CD8-positive, alpha-beta T cell (primary cell): ENCODE measurements at regions of chrX and their contacts with region 1.

Region 1: DNA sequence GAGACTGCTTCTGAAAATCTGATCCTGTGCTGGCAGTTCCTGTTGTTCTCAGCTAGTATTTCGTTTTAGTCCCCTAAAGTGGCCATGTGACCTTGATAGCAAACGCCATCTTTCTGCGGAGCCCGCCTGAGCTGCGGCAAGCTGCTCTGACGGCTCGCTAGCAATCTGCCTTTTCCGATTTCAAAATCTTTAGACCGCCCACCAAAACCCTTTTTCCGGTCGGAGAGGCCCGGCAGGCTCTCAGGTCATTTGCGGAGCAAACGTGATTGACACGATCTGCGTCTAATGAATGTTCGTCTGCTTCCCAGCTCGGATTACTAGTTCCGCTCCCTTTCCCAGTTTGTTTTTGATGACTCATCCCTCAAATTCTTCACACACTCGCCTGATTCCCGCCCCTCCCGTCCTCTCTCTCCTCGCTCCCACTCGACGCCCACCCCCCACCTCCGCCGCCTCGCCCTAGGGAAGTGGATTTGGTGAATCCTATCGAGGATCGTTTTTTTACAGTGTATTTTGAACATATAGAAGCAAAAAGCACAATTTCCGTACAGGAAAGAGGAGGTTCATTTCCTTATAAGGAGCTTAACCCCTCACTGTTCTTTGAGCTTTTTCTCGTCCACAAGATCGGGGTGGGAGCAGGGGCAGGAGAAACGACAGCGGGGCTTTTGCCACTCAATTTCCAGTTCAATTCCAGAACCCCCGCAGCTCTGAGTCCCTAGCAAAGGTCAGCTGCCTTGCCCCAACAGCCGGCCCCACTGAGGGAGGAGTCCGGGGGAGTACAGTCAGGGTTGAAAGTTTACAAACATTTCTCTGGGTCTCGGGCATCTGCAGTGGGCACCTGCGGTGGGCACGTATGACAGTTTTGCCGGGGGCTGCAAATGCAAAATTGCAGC is 37.5 kb downstream of the NLGN3 start:
- DNase-seq: peak; percentile 56 to 94 (median 78)
- ATAC-seq: peak; percentile 92
- H3K4me3 ChIP-seq: peak overlapping the region; percentile 66 to 74
- H3K4me3 Mint-ChIP-seq: peak overlapping the region; percentile 96
- H3K27ac ChIP-seq: peak overlapping the region; percentile 78 to 97
- H3K27ac Mint-ChIP-seq: peak overlapping the region; percentile 100
- H3K4me1 ChIP-seq: peaks cover 7% of the 10 kb centered on the region
- H3K4me1 Mint-ChIP-seq: peaks cover 15% of the 10 kb centered on the region
- H3K27me3 ChIP-seq: no peaks in the 10 kb centered on the region
- H3K27me3 Mint-ChIP-seq: no peaks in the 10 kb centered on the region
- CTCF ChIP-seq: no peak

Region 2: DNA sequence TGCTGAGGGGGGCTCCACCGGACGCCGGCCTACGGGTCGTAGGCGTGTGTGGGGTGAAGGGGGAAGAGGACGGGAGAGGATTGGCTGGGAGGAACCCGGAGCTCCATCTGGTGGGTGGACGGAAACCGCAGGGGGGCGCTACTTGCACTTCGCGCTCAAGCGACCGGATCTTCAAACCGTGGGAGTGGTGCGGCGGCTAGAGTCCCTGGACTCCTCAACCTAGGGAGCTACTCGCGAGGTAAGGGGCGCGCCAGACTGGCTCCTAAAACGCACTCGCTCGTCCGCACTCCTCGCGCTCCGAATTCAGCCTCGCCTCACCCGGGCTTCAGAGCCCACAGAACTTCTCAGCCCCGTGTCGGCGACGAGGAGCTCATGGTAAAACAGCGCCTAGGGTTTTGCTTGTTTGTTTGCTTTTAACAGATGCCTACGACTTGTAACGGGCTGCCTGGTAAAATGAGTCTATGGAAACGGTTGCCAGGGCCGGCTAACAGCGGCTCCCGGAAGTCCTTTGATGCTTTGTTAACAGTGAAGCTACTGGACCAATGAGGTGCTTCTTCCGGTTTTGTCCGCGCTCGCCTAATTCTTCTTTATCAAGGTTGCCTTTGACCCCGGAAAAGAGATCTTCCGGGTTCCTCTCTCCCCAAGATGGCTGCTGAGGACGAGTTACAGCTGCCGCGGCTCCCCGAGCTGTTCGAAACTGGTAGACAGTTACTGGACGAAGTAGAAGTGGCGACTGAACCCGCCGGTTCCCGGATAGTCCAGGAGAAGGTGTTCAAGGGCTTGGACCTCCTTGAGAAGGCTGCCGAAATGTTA is 1048.6 kb before region 1 on chrX and contains the start of gene IGBP1:
- CTCF ChIA-PET with region 1: no interaction called
- POLR2A ChIA-PET with region 1: interaction called, 4 read pairs
- intact Hi-C with region 1: loop called in 1 of 2 experiments (anchors 5 kb)
- DNase-seq: peak; percentile 48 to 93 (median 76)
- ATAC-seq: peak; percentile 81
- H3K4me3 ChIP-seq: peak within 1 kb of the TSS; percentile 84 to 88
- H3K4me3 Mint-ChIP-seq: peak within 1 kb of the TSS; percentile 99
- H3K27ac ChIP-seq: peak within 1 kb of the TSS; percentile 95 to 96
- H3K27ac Mint-ChIP-seq: peak within 1 kb of the TSS; percentile 98
- H3K4me1 ChIP-seq: peaks cover 21% of the 10 kb centered on the region
- H3K4me1 Mint-ChIP-seq: peaks cover 45% of the 10 kb centered on the region
- H3K27me3 ChIP-seq: no peaks in the 10 kb centered on the region
- H3K27me3 Mint-ChIP-seq: no peaks in the 10 kb centered on the region
- CTCF ChIP-seq: peak; percentile 48
- total RNA-seq, gene IGBP1: 55.7 to 56.6 TPM

Region 3: DNA sequence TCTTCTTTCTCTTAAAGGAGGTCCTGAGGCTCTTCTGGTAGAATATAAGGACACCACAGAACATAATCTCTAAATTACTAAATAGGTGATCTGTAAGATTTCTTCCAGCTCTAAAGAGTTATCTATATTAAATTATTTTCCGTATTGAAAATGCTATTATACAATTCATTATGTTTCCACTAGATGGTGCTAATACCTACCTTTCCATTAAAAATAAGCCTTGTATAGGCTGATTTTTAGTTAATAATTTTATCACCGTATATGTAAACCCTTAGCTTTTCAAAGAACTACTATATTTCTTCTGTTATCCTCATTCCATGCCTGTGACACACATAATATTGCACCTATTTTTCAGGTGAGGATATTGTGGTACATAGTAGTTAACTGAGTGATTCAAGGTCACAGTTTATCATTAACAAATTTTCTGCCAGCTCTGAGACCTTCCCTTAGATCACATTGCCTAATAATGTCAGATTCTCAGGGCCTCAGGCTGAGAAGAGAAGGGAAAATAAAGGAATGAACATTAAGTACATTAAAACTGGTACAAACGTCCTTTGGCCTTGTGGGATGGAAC is 412.4 kb before region 1 on chrX:
- CTCF ChIA-PET with region 1: interaction called, 11 read pairs
- POLR2A ChIA-PET with region 1: no interaction called
- intact Hi-C with region 1: loop called in 1 of 2 experiments (anchors 2 kb)
- DNase-seq: peak in 1 of 9 experiments; percentile 20
- ATAC-seq: no peak
- H3K4me3 ChIP-seq: no peak overlapping the region
- H3K4me3 Mint-ChIP-seq: no peak overlapping the region
- H3K27ac ChIP-seq: no peak overlapping the region
- H3K27ac Mint-ChIP-seq: no peak overlapping the region
- H3K4me1 ChIP-seq: no peaks in the 10 kb centered on the region
- H3K4me1 Mint-ChIP-seq: no peaks in the 10 kb centered on the region
- H3K27me3 ChIP-seq: no peaks in the 10 kb centered on the region
- H3K27me3 Mint-ChIP-seq: no peaks in the 10 kb centered on the region
- CTCF ChIP-seq: peak; percentile 69

Region 4: GRCh38 chrX:71068049-71068763 is 113.9 kb before region 1 on chrX and contains the start of gene SNX12:
- CTCF ChIA-PET with region 1: no interaction called
- POLR2A ChIA-PET with region 1: interaction called, 3 read pairs
- intact Hi-C with region 1: loop called (anchors 1 to 5 kb)
- DNase-seq: peak; percentile 70 to 95 (median 84)
- ATAC-seq: peak; percentile 92
- H3K4me3 ChIP-seq: peak within 1 kb of the TSS; percentile 76 to 88
- H3K4me3 Mint-ChIP-seq: peak within 1 kb of the TSS; percentile 94
- H3K27ac ChIP-seq: peak within 1 kb of the TSS; percentile 86 to 91
- H3K27ac Mint-ChIP-seq: peak within 1 kb of the TSS; percentile 99
- H3K4me1 ChIP-seq: peaks cover 13% of the 10 kb centered on the region
- H3K4me1 Mint-ChIP-seq: peaks cover 27% of the 10 kb centered on the region
- H3K27me3 ChIP-seq: no peaks in the 10 kb centered on the region
- H3K27me3 Mint-ChIP-seq: no peaks in the 10 kb centered on the region
- CTCF ChIP-seq: no peak
- total RNA-seq, gene SNX12: 23.9 to 27.1 TPM

Region 5: GRCh38 chrX:71111141-71111843 is 70.9 kb before region 1 on chrX and contains the start of gene IL2RG:
- CTCF ChIA-PET with region 1: no interaction called
- POLR2A ChIA-PET with region 1: no interaction called
- intact Hi-C with region 1: loop called in 1 of 2 experiments (anchors 5 kb)
- DNase-seq: peak; percentile 53 to 94 (median 76)
- ATAC-seq: peak; percentile 85
- H3K4me3 ChIP-seq: peak within 1 kb of the TSS; percentile 74 to 84
- H3K4me3 Mint-ChIP-seq: peak within 1 kb of the TSS; percentile 98
- H3K27ac ChIP-seq: peak within 1 kb of the TSS; percentile 96 to 100
- H3K27ac Mint-ChIP-seq: peak within 1 kb of the TSS; percentile 99
- H3K4me1 ChIP-seq: peaks cover 41% of the 10 kb centered on the region
- H3K4me1 Mint-ChIP-seq: peaks cover 42% of the 10 kb centered on the region
- H3K27me3 ChIP-seq: no peaks in the 10 kb centered on the region
- H3K27me3 Mint-ChIP-seq: no peaks in the 10 kb centered on the region
- CTCF ChIP-seq: no peak
- total RNA-seq, gene IL2RG: 166 to 197 TPM

Region 6: GRCh38 chrX:71222929-71223328 is 40.8 kb after region 1 on chrX and contains the start of gene GJB1:
- CTCF ChIA-PET with region 1: no interaction called
- POLR2A ChIA-PET with region 1: no interaction called
- intact Hi-C with region 1: no loop called
- DNase-seq: no peak
- ATAC-seq: no peak
- H3K4me3 ChIP-seq: no peak within 1 kb of the TSS
- H3K4me3 Mint-ChIP-seq: no peak within 1 kb of the TSS
- H3K27ac ChIP-seq: no peak within 1 kb of the TSS
- H3K27ac Mint-ChIP-seq: no peak within 1 kb of the TSS
- H3K4me1 ChIP-seq: no peaks in the 10 kb centered on the region
- H3K4me1 Mint-ChIP-seq: no peaks in the 10 kb centered on the region
- H3K27me3 ChIP-seq: no peaks in the 10 kb centered on the region
- H3K27me3 Mint-ChIP-seq: no peaks in the 10 kb centered on the region
- CTCF ChIP-seq: no peak
- total RNA-seq, gene GJB1: not detected

Region 7: GRCh38 chrX:71254092-71254941 is 72.2 kb after region 1 on chrX and contains the start of gene ZMYM3:
- CTCF ChIA-PET with region 1: interaction called, 6 read pairs
- POLR2A ChIA-PET with region 1: interaction called, 17 read pairs
- intact Hi-C with region 1: loop called (anchors 1 kb)
- DNase-seq: peak; percentile 50 to 91 (median 80)
- ATAC-seq: peak; percentile 79
- H3K4me3 ChIP-seq: peak within 1 kb of the TSS; percentile 79 to 84
- H3K4me3 Mint-ChIP-seq: peak within 1 kb of the TSS; percentile 94
- H3K27ac ChIP-seq: peak within 1 kb of the TSS; percentile 85 to 87
- H3K27ac Mint-ChIP-seq: peak within 1 kb of the TSS; percentile 92
- H3K4me1 ChIP-seq: peaks cover 28% of the 10 kb centered on the region
- H3K4me1 Mint-ChIP-seq: peaks cover 26% of the 10 kb centered on the region
- H3K27me3 ChIP-seq: no peaks in the 10 kb centered on the region
- H3K27me3 Mint-ChIP-seq: no peaks in the 10 kb centered on the region
- CTCF ChIP-seq: no peak
- total RNA-seq, gene ZMYM3: 12.2 to 13.2 TPM

Region 8: GRCh38 chrX:72181178-72182125 is 999.3 kb after region 1 on chrX and contains the start of gene PIN4:
- CTCF ChIA-PET with region 1: no interaction called
- POLR2A ChIA-PET with region 1: no interaction called
- intact Hi-C with region 1: loop called in 1 of 2 experiments (anchors 10 kb)
- DNase-seq: peak; percentile 65 to 94 (median 82)
- ATAC-seq: peak; percentile 87
- H3K4me3 ChIP-seq: peak within 1 kb of the TSS; percentile 70 to 83
- H3K4me3 Mint-ChIP-seq: no peak within 1 kb of the TSS
- H3K27ac ChIP-seq: peak within 1 kb of the TSS; percentile 57 to 63
- H3K27ac Mint-ChIP-seq: peak within 1 kb of the TSS; percentile 13
- H3K4me1 ChIP-seq: peaks cover 25% of the 10 kb centered on the region
- H3K4me1 Mint-ChIP-seq: peaks cover 14% of the 10 kb centered on the region
- H3K27me3 ChIP-seq: no peaks in the 10 kb centered on the region
- H3K27me3 Mint-ChIP-seq: no peaks in the 10 kb centered on the region
- CTCF ChIP-seq: no peak
- total RNA-seq, gene PIN4: 0.35 to 1.1 TPM